Common myeloid progenitor, CD34-positive (primary cell): ENCODE measurements at regions of chr17 and their contacts with region 1.

Region 1: DNA sequence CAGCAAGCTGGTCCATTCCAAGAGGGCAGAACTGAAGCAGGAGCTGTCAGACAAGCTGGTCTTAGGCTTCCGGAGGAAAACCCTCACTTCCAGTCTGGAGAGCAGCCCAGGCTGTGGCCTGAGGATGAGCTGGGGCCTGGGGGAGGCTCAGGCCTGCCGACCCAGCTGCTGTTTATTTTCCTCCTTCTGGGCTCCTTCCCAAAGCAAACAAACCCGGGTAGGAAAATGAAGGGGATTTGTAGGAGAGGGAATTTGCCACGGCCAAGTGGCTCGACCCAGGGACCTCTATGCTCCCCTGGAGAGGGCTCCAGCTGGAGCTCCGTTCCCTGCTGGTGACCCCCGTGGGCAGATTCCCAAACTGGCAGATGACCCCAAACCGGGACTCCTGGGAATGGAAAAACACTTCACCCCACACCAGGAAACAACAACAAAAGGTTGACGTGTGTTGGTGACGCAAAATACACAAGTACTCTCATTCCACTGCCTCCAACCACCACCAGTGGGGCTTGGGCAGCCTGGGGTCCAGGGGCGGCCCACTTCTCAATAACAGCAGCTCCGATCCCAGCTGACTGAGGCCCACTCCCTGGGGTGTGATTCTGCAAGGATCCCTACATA is 8.8 kb downstream of the JUP start:
- DNase-seq: peak in 2 of 3 donors; percentile 62 to 71
- H3K4me3 ChIP-seq: peak overlapping the region in 2 of 7 experiments; percentile 38 to 50
- H3K27ac ChIP-seq: peak overlapping the region in 1 of 2 experiments; percentile 28
- H3K4me1 ChIP-seq: peaks cover 0 to 82% (median 58%) of the 10 kb centered on the region in 4 experiments
- H3K27me3 ChIP-seq: no peaks in the 10 kb centered on the region

Region 2: GRCh38 chr17:41762841-41763240 is 14.8 kb before region 1 on chr17:
- CTCF ChIA-PET with region 1: interaction called, 20 read pairs
- POLR2A ChIA-PET with region 1: no interaction called
- DNase-seq: no peak
- H3K4me3 ChIP-seq: no peak overlapping the region
- H3K27ac ChIP-seq: no peak overlapping the region
- H3K4me1 ChIP-seq: no peaks in the 10 kb centered on the region
- H3K27me3 ChIP-seq: no peaks in the 10 kb centered on the region

Region 3: DNA sequence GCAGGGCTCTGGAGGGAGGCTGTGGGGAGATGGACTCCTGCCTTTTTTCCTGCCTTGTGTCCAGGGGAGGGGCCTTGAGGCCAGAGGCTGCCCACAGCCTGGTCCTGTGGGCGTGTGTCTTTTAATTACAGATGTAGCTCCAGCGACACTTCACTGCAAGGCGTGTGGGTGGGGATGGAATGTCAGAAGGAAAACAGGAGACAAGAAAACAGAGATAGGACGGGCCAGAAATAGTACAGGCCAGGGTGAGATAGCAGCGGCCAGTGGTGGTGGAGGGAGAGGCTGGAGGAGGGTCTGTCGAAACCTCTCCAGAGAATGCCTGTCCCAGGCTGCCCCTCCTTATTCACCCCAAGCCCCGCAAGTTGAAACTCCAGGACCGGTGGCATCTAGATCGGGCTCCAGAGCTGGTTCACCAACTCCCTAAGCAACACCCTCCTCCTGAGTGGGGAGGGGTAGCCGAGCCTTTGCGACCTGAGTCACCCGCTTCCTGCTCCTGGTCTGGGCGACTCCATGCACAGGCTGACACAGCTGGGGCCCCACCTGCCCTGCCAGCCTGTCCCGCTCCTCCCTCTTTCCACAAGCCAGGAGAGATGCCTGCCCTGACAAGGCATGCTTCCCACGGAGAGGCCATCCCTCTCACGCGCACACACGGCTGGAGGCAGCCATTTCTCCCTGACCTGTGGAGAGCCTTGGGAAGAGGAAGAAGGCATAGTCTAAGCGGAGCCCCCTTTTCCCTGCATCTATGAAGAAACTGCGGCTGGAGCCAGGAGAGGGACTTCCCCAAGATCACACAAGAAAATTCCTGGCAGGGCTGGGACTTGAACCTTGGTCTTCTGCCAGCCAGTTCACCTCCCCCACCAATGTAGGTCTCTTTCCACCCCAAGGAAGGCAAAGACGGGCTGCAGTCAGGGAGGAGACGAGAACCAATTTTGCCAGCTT is 15.4 kb after region 1 on chr17:
- CTCF ChIA-PET with region 1: interaction called, 40 read pairs
- POLR2A ChIA-PET with region 1: interaction called, 5 read pairs
- DNase-seq: peak; percentile 59 to 81 (median 79)
- H3K4me3 ChIP-seq: peak overlapping the region in 2 of 7 experiments; percentile 32 to 48
- H3K27ac ChIP-seq: peak overlapping the region in 1 of 2 experiments; percentile 43
- H3K4me1 ChIP-seq: peaks cover 4 to 41% (median 30%) of the 10 kb centered on the region in 4 experiments
- H3K27me3 ChIP-seq: no peaks in the 10 kb centered on the region